ENCODE measurements at regions of chr3 and their contacts with region 1.

Region 1: DNA sequence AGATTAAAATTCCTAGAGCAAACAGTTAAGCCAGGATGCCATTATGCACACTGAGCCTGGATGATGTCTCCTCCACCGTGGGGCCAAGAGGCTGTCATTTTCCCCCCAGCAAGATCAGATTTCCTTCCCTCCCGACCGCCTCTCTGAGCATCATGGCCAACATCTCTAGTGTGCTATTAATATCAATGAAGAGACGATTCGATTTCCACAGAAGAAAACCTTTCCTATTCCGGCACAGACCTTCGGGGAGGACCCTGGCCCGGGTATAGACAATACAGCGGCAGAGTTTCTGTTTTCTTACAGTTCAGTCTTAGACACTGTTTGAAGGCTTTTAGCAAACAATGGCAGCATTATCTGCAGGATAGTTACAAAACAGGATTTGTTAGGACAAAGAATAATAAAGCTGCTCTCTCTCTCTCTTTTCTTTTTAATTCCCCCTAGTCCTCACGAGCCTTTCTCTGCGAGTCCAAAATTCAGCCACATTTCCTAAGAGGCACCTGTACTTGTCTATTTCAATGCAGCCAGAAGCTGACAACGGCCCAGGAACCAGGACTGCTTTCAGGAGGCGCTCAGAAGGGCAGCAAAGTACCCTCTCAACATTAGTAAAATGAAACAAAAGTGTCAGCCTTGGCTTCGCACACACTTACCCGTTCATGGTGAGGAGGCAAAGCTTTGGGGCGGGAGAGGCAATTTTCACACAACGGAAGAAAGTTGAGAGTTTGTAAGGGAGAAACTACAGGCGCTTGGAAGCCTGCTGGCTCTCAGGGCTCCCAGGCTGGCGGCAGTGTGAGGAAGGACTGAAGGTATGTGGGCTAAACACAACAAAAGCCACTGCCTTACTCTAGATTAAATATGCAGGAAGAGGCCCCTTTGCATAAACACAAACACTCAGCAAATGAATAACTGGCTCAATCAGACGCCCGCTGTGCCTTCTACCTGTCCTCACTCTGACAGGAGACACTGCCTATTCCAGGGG is 278.0 kb downstream of the FOXP1 start:
- DNase-seq: no peak
- H3K4me3 ChIP-seq: peak overlapping the region; percentile 40 to 56 (median 50)
- H3K27ac ChIP-seq: peak overlapping the region; percentile 78 to 83 (median 82)
- H3K4me1 ChIP-seq: peaks cover 18 to 88% (median 84%) of the 10 kb centered on the region in 4 donors
- H3K27me3 ChIP-seq: no peaks in the 10 kb centered on the region
- CTCF ChIP-seq: peak in 1 of 3 experiments; percentile 5
- EP300 ChIP-seq: no peak
- POLR2A ChIP-seq: no peak

Region 2: DNA sequence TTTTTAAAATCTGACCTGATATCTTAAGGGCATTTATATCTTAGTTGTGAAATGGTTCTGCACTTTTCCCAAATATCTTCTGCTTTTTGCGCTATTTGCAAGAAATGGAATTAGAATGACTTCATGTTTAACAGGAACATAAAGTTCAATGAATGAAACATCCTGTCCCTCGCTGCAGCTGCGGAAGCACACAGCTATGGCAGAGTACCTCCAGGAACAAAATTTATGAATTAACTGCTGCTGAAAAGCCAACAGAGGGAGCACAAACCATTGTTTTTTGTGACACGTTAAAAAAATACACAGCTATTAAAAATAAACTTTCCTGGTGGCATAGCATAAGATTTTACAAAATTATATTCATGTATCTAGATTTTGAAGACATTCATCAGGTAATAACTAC is 588.7 kb before region 1 on chr3:
- intact Hi-C with region 1: loop called (anchors 10 kb)
- DNase-seq: no peak
- H3K4me3 ChIP-seq: no peak overlapping the region
- H3K27ac ChIP-seq: no peak overlapping the region
- H3K4me1 ChIP-seq: peaks cover 0 to 15% (median 10%) of the 10 kb centered on the region in 4 donors
- H3K27me3 ChIP-seq: no peaks in the 10 kb centered on the region
- CTCF ChIP-seq: peak; percentile 59 to 64 (median 61)
- EP300 ChIP-seq: peak; percentile 55
- POLR2A ChIP-seq: no peak

Region 3: DNA sequence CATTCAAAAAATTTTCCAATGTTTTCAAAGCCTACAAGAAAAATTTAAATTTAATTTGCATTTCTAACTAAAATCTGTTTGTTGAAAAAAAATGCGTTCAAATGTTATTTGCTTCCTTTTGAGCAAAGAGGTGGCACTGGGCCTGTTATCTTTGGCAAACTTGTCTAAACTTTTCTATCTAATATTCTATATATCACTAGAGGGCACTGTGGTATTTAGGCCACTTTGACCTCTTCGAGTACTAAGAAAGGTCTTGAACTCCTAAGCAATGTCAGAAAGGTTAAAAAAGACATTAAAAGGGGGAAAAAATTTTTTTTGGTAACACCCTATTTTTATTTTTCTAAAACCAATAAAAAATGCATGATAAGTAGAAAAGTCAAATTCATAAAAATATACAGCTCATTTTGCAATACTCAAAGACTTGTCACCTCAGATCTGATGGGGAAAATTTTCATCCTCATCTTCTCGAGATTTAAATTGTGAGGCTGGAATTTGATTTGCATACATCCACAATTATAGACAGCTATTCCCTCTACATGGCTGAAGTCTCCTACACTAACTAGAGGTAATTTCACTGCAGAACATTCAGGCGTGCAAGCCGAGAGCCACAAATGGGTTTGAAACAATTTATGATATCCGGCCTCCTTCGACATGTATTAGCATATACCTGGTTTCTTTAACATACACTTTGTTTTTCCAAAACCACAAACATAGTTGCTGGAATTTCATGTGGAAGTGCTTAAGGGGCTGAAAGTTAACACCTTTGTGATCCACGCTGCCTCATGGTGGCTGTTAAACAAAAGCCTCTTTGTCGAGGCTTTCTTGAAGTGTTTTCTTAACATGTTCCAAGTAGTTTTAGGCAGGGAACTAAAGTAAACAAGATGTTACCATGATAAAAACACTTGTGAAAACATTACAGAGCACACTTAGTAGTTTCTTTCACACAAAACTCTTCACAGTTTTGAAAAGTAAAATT is 298.4 kb before region 1 on chr3:
- intact Hi-C with region 1: loop called (anchors 10 kb)
- DNase-seq: no peak
- H3K4me3 ChIP-seq: no peak overlapping the region
- H3K27ac ChIP-seq: peak overlapping the region; percentile 63 to 78 (median 74)
- H3K4me1 ChIP-seq: peaks cover 48 to 99% (median 97%) of the 10 kb centered on the region in 4 donors
- H3K27me3 ChIP-seq: no peaks in the 10 kb centered on the region
- CTCF ChIP-seq: peak; percentile 31 to 49 (median 40)
- EP300 ChIP-seq: no peak
- POLR2A ChIP-seq: no peak

Region 4: DNA sequence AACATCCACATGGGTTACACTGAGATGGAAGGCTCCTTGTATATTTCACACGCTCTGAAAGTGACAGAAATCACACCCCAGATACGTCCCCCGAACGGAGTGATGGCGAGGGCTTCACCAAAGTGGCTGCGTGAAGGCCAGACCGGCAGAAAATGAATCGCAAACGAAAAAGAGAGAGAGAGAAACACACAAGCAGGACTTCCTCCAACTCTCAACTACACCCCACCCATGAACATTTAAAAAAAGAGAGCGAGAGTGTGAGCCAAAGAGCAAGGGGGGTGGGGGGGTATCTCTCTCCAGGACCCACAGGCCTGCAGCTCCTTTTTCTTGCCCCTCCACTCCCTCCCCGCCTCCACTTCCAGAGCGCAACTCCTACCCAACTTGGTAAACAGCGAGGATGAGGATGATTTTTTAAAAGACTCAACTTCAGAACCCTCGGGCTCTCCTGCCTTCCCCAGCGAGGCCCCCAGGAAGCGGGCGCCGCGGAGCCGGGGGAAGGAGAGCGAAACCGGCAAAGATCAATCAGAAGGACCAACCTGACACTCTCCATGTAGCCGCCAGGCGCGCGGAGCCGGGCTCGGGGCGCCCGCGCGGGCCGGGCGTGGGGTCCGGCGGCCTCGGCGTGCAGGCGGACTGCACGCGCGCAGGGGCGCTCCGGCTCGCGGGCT is 241.1 kb before region 1 on chr3:
- intact Hi-C with region 1: loop called (anchors 5 kb)
- DNase-seq: no peak
- H3K4me3 ChIP-seq: peak overlapping the region; percentile 68 to 75 (median 72)
- H3K27ac ChIP-seq: peak overlapping the region; percentile 92 to 98 (median 98)
- H3K4me1 ChIP-seq: peaks cover 40 to 63% (median 56%) of the 10 kb centered on the region in 4 donors
- H3K27me3 ChIP-seq: no peaks in the 10 kb centered on the region
- CTCF ChIP-seq: peak in 2 of 3 experiments; percentile 14 to 25
- EP300 ChIP-seq: no peak
- POLR2A ChIP-seq: no peak

Region 5: DNA sequence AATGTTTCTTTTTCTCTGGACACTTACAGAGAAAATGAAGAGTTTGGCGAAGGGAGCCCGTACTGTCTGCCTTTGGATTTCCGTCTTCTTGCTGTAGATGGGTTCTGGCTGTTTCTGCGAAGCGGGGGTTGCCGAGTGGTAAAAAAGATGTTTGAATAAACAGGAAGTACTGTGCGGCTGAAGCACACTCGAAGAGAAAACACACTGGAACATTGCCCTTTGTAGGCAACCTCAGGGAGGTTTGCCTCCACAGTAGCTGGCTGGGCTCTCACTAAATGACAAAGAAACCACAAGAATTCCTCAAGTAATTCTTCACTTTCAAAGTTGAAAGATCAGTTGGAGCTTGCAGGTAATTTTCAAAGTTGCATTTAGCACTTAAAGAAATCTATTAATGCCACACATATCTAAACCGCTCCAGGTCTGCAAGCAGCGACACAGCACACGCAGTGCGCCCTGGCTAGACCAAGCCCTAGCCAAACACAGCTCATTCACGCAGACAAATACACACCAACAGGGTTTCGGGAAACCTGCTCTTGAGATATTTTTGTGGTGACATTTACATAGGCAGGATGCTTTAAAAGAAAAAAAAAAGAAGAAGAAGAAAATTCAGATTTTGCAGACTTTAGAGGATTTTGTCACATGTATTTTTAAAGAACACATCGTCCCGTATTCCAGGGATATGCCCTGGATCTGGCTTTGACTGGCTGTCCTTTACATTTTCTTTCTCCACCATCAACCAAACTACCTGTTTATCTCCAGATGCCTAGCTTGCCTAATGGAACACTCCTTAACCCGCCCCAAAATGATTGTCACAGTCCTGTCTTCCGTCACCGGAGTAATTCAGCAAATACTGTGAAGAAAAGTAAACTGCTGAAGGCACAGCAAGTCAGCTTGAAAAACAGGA is 174.8 kb before region 1 on chr3:
- intact Hi-C with region 1: loop called (anchors 10 kb)
- DNase-seq: peak; percentile 94
- H3K4me3 ChIP-seq: peak overlapping the region; percentile 44 to 60 (median 57)
- H3K27ac ChIP-seq: peak overlapping the region; percentile 80 to 91 (median 82)
- H3K4me1 ChIP-seq: peaks cover 55 to 78% (median 74%) of the 10 kb centered on the region in 4 donors
- H3K27me3 ChIP-seq: no peaks in the 10 kb centered on the region
- CTCF ChIP-seq: no peak
- EP300 ChIP-seq: no peak
- POLR2A ChIP-seq: no peak

Region 6: DNA sequence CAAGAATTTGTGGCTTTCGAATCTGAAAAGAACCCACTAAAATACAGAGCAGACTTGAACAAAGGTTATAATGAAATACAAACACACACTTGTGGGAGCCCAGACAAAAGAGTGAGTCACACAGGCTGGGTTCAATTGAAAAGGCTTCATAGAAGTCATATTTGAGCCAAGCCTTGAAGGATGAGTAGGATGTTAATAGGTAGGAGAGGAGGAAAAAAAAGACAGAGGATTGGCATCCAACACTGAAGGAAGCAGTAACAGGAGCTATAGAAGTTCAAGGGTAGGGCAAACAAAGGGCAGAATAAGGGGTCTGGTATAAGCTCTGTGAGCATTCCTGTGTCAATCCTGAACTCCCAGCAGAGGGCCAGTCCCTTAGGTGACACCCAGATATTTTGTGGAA is 47.4 kb before region 1 on chr3:
- intact Hi-C with region 1: loop called (anchors 5 kb)
- DNase-seq: no peak
- H3K4me3 ChIP-seq: no peak overlapping the region
- H3K27ac ChIP-seq: peak overlapping the region; percentile 12 to 51 (median 28)
- H3K4me1 ChIP-seq: peaks cover 6 to 45% (median 43%) of the 10 kb centered on the region in 4 donors
- H3K27me3 ChIP-seq: no peaks in the 10 kb centered on the region
- CTCF ChIP-seq: no peak
- EP300 ChIP-seq: no peak
- POLR2A ChIP-seq: no peak

Region 7: DNA sequence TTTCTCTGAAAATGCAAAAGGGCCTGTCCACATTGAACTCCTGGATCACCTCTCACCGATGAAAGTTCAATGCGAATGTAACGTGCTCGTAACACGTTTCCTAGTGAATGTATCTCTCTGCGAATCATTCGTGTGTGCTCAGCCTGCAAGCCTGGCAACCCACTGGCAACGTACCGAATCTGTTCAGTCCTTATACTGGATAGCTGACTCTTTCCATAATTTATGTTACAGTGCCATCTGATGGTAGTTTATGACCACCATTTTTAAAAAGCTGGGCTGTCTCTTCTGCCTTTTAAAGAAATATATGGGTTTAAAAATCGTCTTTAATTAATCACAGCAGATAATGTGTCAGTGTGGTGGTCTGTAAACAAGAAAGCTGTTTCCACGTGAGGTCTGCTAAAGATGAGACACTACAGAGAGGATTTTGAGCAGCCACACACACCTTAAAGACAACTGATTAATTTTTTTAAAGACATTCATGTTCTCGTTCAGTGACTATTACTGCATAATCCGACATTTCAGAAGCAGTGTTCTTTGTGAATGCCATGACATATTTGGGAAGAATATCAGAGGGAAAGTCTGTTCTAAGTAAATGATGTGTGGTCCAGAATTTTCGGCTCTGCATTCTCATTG is 347.4 kb after region 1 on chr3:
- intact Hi-C with region 1: loop called (anchors 5 kb)
- DNase-seq: no peak
- H3K4me3 ChIP-seq: peak overlapping the region in 3 of 4 donors; percentile 4 to 38 (median 19)
- H3K27ac ChIP-seq: peak overlapping the region; percentile 45 to 60 (median 55)
- H3K4me1 ChIP-seq: peaks cover 8 to 41% (median 37%) of the 10 kb centered on the region in 4 donors
- H3K27me3 ChIP-seq: no peaks in the 10 kb centered on the region
- CTCF ChIP-seq: peak; percentile 57 to 71 (median 65)
- EP300 ChIP-seq: no peak
- POLR2A ChIP-seq: no peak

Region 8: GRCh38 chr3:72068621-72069020 is 763.1 kb after region 1 on chr3:
- intact Hi-C with region 1: no loop called
- DNase-seq: no peak
- H3K4me3 ChIP-seq: no peak overlapping the region
- H3K27ac ChIP-seq: no peak overlapping the region
- H3K4me1 ChIP-seq: no peaks in the 10 kb centered on the region
- H3K27me3 ChIP-seq: no peaks in the 10 kb centered on the region
- CTCF ChIP-seq: no peak
- EP300 ChIP-seq: no peak
- POLR2A ChIP-seq: no peak